ENCODE measurements at regions of chr14 and their contacts with region 1.

Region 1: DNA sequence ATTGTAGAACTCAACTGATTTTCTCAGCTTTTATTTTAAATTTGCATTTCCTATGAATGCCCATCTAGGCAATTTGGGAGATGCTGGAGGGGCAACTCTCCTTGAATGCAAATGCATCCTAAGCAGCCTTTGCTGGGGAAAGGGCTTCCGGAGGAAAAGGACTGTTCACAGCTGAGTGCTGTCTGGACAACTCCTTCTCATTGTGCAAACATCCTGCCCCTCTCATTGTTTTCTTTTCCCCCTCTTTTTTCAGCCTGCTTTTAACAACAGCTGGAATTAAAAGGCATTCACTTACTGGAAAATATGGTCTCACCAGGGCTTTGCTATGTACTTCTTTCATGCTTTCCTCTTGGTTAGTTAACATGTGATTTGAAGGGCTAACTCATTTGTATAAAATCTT is 397.8 kb downstream of the FUT8 start:
- DNase-seq: no peak
- H3K4me3 ChIP-seq: no peak overlapping the region
- H3K27ac ChIP-seq: no peak overlapping the region
- H3K27me3 ChIP-seq: no peaks in the 10 kb centered on the region
- CTCF ChIP-seq: no peak

Region 2: DNA sequence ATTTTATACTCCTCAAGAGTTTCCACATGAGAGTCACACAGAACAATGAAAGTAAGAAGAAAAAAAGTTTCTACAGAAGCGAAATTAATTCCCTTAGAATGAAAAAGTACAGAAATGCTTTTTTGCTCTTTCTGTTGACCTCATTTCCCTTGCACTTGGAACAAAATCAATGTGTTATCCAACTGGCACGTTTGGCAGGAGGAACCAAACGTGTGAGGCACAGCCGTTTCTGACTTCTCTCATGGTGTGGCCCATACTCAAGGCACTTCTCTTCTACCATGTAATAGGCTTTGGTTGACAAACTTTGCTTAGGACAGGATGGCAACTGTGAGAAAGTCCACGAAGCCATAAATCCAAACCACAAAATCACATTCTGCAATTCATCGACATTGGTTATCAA is 100.7 kb before region 1 on chr14:
- intact Hi-C with region 1: no loop called
- DNase-seq: peak in 1 of 10 donors; percentile 42
- H3K4me3 ChIP-seq: no peak overlapping the region
- H3K27ac ChIP-seq: peak overlapping the region in 2 of 59 donors; percentile 12 to 26
- H3K27me3 ChIP-seq: no peaks in the 10 kb centered on the region
- CTCF ChIP-seq: no peak

Region 3: GRCh38 chr14:65787471-65787870 is 22.9 kb before region 1 on chr14:
- intact Hi-C with region 1: loop called in 1 of 2 experiments (anchors 1 kb)
- DNase-seq: no peak
- H3K4me3 ChIP-seq: no peak overlapping the region
- H3K27ac ChIP-seq: no peak overlapping the region
- H3K27me3 ChIP-seq: no peaks in the 10 kb centered on the region
- CTCF ChIP-seq: no peak